Mammary epithelial cell (primary cell): ENCODE measurements at regions of chr5 and their contacts with region 1.

Region 1: GRCh38 chr5:36241631-36242533 is at the start of gene NADK2:
- DNase-seq: peak; percentile 92
- H3K4me3 ChIP-seq: peak within 1 kb of the TSS; percentile 86 to 88 (median 86)
- H3K27ac ChIP-seq: peak within 1 kb of the TSS; percentile 82
- H3K4me1 ChIP-seq: peaks cover 18% of the 10 kb centered on the region
- H3K27me3 ChIP-seq: no peaks in the 10 kb centered on the region
- CTCF ChIP-seq: peak; percentile 23 to 52
- total RNA-seq, gene NADK2: 18.5 to 21.1 TPM

Region 2: GRCh38 chr5:36392818-36393217 is 150.9 kb after region 1 on chr5:
- CTCF ChIA-PET with region 1: interaction called, 11 read pairs
- dilution Hi-C with region 1: no loop called
- in situ Hi-C with region 1: no loop called
- intact Hi-C with region 1: no loop called
- DNase-seq: peak; percentile 24
- H3K4me3 ChIP-seq: no peak overlapping the region
- H3K27ac ChIP-seq: no peak overlapping the region
- H3K4me1 ChIP-seq: no peaks in the 10 kb centered on the region
- H3K27me3 ChIP-seq: no peaks in the 10 kb centered on the region
- CTCF ChIP-seq: no peak

Region 3: GRCh38 chr5:36832299-36832698 is 590.4 kb after region 1 on chr5:
- CTCF ChIA-PET with region 1: no interaction called
- dilution Hi-C with region 1: no loop called
- in situ Hi-C with region 1: no loop called
- intact Hi-C with region 1: no loop called
- DNase-seq: no peak
- H3K4me3 ChIP-seq: no peak overlapping the region
- H3K27ac ChIP-seq: no peak overlapping the region
- H3K4me1 ChIP-seq: no peaks in the 10 kb centered on the region
- H3K27me3 ChIP-seq: peaks cover 3% of the 10 kb centered on the region
- CTCF ChIP-seq: no peak